ENCODE measurements at regions of chr2 and their contacts with region 1.

Region 1: DNA sequence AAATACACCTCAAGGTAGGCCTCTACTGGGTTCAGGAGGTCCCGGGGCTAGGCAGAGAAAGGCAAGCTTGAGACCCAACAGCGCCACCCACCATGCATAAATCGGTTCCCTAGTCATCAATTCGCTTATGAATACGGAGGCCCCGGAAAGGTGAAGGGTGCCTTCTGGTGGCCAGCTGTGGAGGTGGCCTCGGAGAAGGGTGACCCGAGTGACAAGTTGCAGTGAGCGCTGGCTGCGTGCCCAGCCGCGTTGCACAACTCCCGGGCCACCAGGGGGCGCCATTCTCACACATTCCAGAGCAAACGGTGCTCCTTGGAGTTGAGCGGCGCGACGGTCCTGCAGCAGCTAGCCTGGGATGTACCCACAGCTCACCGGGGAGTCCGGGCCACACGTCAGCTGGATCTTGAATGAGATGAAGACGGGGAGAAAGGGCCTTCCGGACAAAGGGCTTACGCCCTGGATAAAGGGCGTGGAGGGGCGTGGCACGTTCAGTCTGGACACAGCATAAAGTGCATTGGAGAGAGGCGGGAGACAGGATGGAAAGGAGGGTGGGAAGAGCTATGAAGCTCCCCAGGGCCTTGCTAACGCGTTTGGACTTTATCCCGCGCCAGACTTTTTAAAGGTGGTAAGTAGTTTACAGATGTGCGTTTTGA is 20.4 kb downstream of the TMSB10 start:
- DNase-seq: peak; percentile 84

Region 2: DNA sequence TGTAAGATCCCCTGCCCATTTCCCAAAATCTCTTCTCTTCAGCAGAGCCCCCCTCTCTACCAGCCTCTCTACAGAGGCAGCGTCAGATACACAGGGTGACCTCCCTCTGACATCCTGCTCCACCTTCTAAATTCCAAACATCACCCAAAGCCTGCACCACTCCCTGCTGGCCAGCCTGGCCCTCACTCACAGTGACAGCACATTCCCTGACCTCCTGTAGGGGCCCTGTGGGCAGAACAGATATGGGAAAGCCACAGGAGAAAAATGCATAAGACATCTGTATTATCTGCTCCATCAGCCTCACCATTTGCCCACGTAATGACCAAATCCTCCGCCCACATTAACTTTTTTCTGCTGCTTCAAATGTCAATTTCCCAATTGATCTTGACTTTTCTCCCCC is 85.5 kb before region 1 on chr2:
- CTCF ChIA-PET with region 1: no interaction called
- POLR2A ChIA-PET with region 1: no interaction called
- DNase-seq: no peak

Region 3: DNA sequence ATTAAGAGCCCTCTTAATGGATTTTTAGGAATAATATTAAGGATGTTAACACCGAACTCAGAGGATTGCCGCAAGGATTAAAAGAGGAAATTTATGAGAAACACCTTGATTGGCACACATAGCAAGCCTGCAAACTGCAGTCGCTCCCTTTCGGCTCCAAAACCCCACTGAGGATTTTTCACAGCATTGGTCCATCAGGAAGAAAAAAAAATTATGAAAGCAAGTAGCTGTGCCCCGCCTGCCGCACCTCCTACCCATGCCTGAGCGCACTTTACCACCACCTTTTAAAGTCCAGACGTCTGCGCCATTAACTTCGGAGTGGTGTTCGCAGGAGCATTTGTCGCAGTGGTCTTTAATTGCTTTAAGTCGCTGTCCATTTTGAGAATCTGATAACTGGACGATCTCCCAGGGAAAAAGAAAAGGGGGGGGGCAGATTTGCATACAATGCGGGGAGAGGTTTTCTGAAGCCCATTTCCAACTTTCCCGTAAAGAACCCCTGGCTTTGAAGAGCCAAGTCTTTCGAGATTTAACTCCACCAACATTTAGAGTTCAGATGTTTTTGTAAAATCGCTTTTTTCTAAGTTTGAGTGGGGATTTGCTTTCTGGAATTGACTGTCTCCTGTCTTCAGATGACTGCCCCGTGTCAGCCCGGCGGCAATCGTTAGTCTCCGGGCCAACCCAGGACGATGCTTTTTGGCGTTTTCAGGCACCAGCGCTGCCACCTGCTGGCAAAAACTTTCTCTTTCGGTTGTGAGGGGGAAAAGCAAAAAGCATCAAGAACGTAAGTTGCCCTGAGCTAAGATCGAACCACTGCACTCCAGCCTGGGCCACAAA is 44.1 kb before region 1 on chr2:
- CTCF ChIA-PET with region 1: interaction called, 11 read pairs
- POLR2A ChIA-PET with region 1: interaction called, 3 read pairs
- DNase-seq: peak; percentile 73

Region 4: DNA sequence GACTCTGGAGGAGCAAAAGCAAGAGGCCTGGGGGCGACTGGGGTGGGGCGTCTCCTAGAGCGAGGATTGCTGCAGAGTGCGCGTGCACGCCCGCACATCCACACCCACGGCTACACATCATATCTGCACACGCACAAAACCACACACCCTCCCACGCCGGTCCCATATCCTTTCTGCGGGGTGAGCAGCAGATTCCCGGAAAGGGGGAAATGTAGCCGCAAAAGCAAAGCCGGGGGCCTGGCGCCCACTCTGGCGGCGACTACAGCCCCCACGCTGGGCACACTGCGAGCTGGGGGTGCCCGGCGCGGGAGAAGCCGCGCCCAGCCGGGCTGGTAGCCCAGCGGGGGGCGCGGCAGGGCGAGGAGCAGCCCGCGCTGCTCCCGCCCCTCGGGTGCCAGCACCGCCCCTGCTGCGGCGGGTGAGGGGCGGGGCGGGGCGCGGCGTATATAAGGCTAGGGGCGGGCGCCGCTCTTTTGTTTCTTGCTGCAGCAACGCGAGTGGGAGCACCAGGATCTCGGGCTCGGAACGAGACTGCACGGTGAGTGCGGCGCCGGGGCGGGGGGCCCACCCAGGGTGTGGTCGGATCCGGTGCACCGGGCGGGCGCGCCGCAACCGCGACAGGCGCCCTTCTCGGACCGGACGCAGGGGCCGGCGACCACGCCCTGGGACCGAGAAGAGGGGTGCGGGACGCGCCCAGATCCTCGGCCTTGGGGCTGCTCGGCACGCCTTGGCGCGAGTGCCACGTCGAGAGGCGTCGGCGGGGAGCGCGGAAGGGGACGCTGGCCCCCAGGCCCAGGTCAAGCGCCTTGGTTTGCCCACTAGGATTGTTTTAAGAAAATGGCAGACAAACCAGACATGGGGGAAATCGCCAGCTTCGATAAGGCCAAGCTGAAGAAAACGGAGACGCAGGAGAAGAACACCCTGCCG is 20.4 kb before region 1 on chr2 and contains the start of gene TMSB10:
- CTCF ChIA-PET with region 1: interaction called, 20 read pairs
- POLR2A ChIA-PET with region 1: interaction called, 34 read pairs
- DNase-seq: peak; percentile 90

Region 5: GRCh38 chr2:84939426-84940087 is 13.7 kb after region 1 on chr2:
- CTCF ChIA-PET with region 1: interaction called, 15 read pairs
- POLR2A ChIA-PET with region 1: no interaction called
- DNase-seq: no peak

Region 6: GRCh38 chr2:84958135-84959044 is 32.5 kb after region 1 on chr2:
- CTCF ChIA-PET with region 1: interaction called, 12 read pairs
- POLR2A ChIA-PET with region 1: interaction called, 7 read pairs
- DNase-seq: peak; percentile 37

Region 7: DNA sequence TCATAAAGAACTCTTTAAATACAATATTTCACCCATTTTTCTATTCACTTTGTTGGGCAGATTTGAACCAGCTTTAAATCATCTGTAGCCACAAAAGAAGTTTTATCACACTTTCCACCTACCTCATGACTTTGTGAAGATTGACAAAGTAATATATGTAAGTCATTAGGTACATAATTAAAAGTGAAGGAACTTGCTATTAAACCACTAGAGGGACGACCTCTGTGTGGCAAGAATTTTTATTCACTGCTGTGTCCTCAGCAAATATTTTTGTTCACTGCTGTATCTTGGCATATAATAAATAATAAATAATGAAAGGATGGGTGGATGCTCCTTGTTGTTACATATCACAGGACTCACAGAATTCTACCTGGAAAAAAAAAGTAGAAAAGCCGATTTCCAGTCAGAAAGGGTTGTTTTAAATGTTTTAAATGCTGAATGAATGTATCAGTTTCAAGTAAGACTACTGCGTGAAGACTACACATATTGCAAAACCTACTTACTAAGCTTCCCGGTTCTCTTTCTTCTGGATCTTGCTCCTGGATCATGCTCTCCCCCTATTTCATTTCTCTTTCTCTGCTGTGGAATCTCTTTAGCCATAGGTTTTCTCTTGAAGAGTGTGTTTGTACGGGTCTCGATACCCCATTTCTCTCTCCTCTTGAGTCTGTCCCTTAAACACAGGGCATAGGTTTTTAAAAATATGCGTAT is 90.0 kb after region 1 on chr2:
- CTCF ChIA-PET with region 1: interaction called, 20 read pairs
- POLR2A ChIA-PET with region 1: interaction called, 3 read pairs
- DNase-seq: no peak

Region 8: DNA sequence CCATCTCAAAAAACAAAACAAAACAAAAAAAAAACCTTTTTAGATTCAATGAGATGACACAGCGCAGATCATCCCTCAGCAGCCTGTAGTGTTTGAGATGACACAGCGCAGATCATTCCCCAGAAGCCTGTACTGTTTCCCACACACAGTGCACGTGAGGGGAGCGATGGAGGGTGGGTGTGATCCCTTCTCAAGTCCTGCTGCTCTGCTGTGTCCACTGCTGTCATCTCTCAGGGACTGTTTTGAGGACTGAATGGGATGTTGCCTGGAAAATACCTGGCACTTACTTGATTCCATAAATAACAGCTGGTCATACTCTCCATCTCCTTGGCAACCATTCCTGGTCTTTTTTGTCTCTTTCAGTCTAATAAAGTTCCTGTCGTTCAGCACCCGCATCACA is 376.3 kb after region 1 on chr2:
- CTCF ChIA-PET with region 1: interaction called, 11 read pairs
- POLR2A ChIA-PET with region 1: no interaction called
- DNase-seq: no peak

Region 9: DNA sequence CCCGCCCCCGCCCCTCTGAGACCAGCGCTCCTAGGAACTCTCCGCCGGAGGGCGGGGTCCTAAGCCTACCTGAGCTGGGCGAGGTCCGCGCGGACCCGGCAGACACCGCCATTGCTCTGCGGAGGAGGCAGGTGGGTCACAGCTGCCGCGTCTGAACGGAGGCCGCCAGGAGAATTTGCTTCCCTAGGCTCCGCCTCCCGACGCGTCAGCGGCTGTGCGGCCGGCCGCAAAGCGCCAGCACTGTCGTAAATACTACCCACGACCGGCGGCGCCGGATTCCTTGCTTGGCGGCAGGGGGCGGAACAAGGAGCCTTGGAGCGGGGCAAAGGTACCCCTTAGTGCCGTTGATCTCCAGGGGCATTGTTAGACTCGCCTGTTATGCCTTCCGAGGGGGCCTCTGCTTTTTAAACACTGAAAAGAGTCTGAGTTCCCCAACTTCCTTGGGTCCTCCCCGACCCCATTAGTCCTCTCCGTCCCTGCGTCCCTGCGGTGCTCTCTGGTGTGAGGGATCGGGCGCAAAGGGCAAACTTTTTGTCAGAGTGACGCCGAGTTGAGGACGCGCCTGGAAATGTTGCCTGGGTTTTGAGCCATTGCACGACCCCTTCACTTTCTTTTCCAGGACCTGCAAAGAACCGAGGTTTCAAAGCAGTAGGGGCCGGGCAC is 635.6 kb after region 1 on chr2 and contains the start of gene GGCX:
- CTCF ChIA-PET with region 1: no interaction called
- POLR2A ChIA-PET with region 1: no interaction called
- DNase-seq: peak; percentile 93

Measured in HEK293T (cell line).